HepG2 (cell line): ENCODE measurements at regions of chr12 and their contacts with region 1.

Region 1: GRCh38 chr12:8078398-8078797 is 3.7 kb upstream of the NECAP1 start:
- DNase-seq: no peak
- ATAC-seq: no peak
- H3K4me3 ChIP-seq: no peak overlapping the region
- H3K27ac ChIP-seq: no peak overlapping the region
- H3K4me1 ChIP-seq: peaks cover 18% of the 10 kb centered on the region
- H3K27me3 ChIP-seq: peaks cover 0 to 2% of the 10 kb centered on the region in 2 experiments; a peak in 2 of 5 replicates
- CTCF ChIP-seq: no peak
- EP300 ChIP-seq: no peak
- POLR2A ChIP-seq: no peak
- RAD21 ChIP-seq: no peak

Region 2: GRCh38 chr12:8032242-8033152 is 45.9 kb before region 1 on chr12 and contains the start of gene FOXJ2:
- CTCF ChIA-PET with region 1: no interaction called
- POLR2A ChIA-PET with region 1: interaction called, 3 read pairs
- in situ Hi-C with region 1: no loop called
- intact Hi-C with region 1: loop called (anchors 5 kb)
- DNase-seq: peak; percentile 11
- ATAC-seq: peak; percentile 91
- H3K4me3 ChIP-seq: peak within 1 kb of the TSS; percentile 87 to 92 (median 89)
- H3K27ac ChIP-seq: peak within 1 kb of the TSS; percentile 67
- H3K4me1 ChIP-seq: peaks cover 59% of the 10 kb centered on the region
- H3K27me3 ChIP-seq: no peaks in the 10 kb centered on the region; a peak in 1 of 5 replicates
- CTCF ChIP-seq: no peak; the same call in 1 of the 2 replicates
- EP300 ChIP-seq: no peak
- POLR2A ChIP-seq: peak; percentile 23 to 57; a peak in 2 of 4 replicates
- RAD21 ChIP-seq: no peak
- total RNA-seq, gene FOXJ2: 2.2 and 3.0 TPM in 2 replicates

Region 3: GRCh38 chr12:8045952-8046944 is 32.1 kb before region 1 on chr12:
- CTCF ChIA-PET with region 1: interaction called, 10 read pairs
- POLR2A ChIA-PET with region 1: no interaction called
- in situ Hi-C with region 1: no loop called
- intact Hi-C with region 1: loop called (anchors 1 kb)
- DNase-seq: peak; percentile 52
- ATAC-seq: peak; percentile 85
- H3K4me3 ChIP-seq: no peak overlapping the region
- H3K27ac ChIP-seq: no peak overlapping the region
- H3K4me1 ChIP-seq: no peaks in the 10 kb centered on the region
- H3K27me3 ChIP-seq: no peaks in the 10 kb centered on the region
- CTCF ChIP-seq: peak; percentile 78
- EP300 ChIP-seq: no peak
- POLR2A ChIP-seq: no peak
- RAD21 ChIP-seq: no peak

Region 4: GRCh38 chr12:8108808-8109398 is 30.5 kb after region 1 on chr12:
- CTCF ChIA-PET with region 1: no interaction called
- POLR2A ChIA-PET with region 1: no interaction called
- in situ Hi-C with region 1: no loop called
- intact Hi-C with region 1: no loop called
- DNase-seq: peak; percentile 62
- ATAC-seq: peak; percentile 70
- H3K4me3 ChIP-seq: no peak overlapping the region
- H3K27ac ChIP-seq: no peak overlapping the region
- H3K4me1 ChIP-seq: no peaks in the 10 kb centered on the region
- H3K27me3 ChIP-seq: no peaks in the 10 kb centered on the region
- CTCF ChIP-seq: peak; percentile 84
- EP300 ChIP-seq: no peak
- POLR2A ChIP-seq: no peak
- RAD21 ChIP-seq: peak; percentile 67